Ovary (tissue), 10 donors: ENCODE measurements at regions of chr13 and their contacts with region 1.

Region 1: GRCh38 chr13:109786457-109787134 is at the start of gene IRS2:
- DNase-seq: peak; percentile 91 to 94 (median 94)
- H3K4me3 ChIP-seq: peak within 1 kb of the TSS; percentile 68
- H3K27ac ChIP-seq: peak within 1 kb of the TSS; percentile 89 to 90
- H3K4me1 ChIP-seq: peaks cover 24% of the 10 kb centered on the region
- H3K27me3 ChIP-seq: no peaks in the 10 kb centered on the region
- CTCF ChIP-seq: peak in 1 of 3 donors; percentile 22
- EP300 ChIP-seq: no peak
- POLR2A ChIP-seq: peak; percentile 89
- total RNA-seq, gene IRS2: 19.3 to 40.9 (median 29.3) TPM

Region 2: DNA sequence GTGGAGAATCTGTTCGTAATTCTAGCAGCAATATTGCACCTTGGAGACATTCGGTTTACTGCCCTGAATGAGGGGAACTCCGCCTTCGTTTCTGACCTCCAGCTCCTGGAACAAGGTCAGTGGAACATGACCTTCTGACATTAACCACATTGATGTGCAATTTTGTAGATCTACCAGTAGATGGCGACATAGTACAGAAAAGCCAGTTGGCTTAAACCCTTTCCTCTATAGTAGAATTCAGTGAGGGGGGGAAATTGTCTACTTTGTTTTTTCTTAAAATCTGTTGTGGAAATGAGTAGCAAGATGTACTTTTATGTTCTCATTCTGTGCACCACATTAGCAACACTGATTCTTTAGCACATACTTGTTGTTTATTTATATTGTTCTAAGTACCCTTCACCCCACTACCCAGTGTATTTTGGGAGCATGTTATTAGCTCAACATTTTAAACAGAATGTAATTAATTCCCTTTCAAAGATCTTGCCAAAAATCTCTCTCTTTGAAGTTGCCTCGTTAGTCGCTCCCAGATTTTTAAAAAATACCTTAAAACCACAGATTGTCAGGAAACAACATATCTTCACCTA is 825.0 kb before region 1 on chr13:
- intact Hi-C with region 1: loop called in 2 of 4 experiments (anchors 10 kb)
- DNase-seq: no peak
- H3K4me3 ChIP-seq: no peak overlapping the region
- H3K27ac ChIP-seq: no peak overlapping the region
- H3K4me1 ChIP-seq: peaks cover 1% of the 10 kb centered on the region
- H3K27me3 ChIP-seq: no peaks in the 10 kb centered on the region
- CTCF ChIP-seq: peak; percentile 65 to 77 (median 71)
- EP300 ChIP-seq: no peak
- POLR2A ChIP-seq: no peak

Region 3: GRCh38 chr13:109145631-109146030 is 641.0 kb before region 1 on chr13:
- intact Hi-C with region 1: loop called in 3 of 4 experiments (anchors 5 to 10 kb)
- DNase-seq: peak in 3 of 5 donors; percentile 27 to 36 (median 35)
- H3K4me3 ChIP-seq: no peak overlapping the region
- H3K27ac ChIP-seq: no peak overlapping the region
- H3K4me1 ChIP-seq: peaks cover 2% of the 10 kb centered on the region
- H3K27me3 ChIP-seq: no peaks in the 10 kb centered on the region
- CTCF ChIP-seq: peak in 1 of 3 donors; percentile 74
- EP300 ChIP-seq: no peak
- POLR2A ChIP-seq: no peak

Region 4: GRCh38 chr13:109156181-109156935 is 630.2 kb before region 1 on chr13:
- intact Hi-C with region 1: loop called in 1 of 4 experiments (anchors 10 kb)
- DNase-seq: no peak
- H3K4me3 ChIP-seq: no peak overlapping the region
- H3K27ac ChIP-seq: no peak overlapping the region
- H3K4me1 ChIP-seq: peaks cover 12% of the 10 kb centered on the region
- H3K27me3 ChIP-seq: no peaks in the 10 kb centered on the region
- CTCF ChIP-seq: no peak
- EP300 ChIP-seq: no peak
- POLR2A ChIP-seq: no peak

Region 5: GRCh38 chr13:109576309-109576813 is 210.2 kb before region 1 on chr13:
- intact Hi-C with region 1: no loop called
- DNase-seq: no peak
- H3K4me3 ChIP-seq: no peak overlapping the region
- H3K27ac ChIP-seq: no peak overlapping the region
- H3K4me1 ChIP-seq: no peaks in the 10 kb centered on the region
- H3K27me3 ChIP-seq: no peaks in the 10 kb centered on the region
- CTCF ChIP-seq: no peak
- EP300 ChIP-seq: no peak
- POLR2A ChIP-seq: no peak